ENCODE measurements at regions of chr2 and their contacts with region 1.

Region 1: DNA sequence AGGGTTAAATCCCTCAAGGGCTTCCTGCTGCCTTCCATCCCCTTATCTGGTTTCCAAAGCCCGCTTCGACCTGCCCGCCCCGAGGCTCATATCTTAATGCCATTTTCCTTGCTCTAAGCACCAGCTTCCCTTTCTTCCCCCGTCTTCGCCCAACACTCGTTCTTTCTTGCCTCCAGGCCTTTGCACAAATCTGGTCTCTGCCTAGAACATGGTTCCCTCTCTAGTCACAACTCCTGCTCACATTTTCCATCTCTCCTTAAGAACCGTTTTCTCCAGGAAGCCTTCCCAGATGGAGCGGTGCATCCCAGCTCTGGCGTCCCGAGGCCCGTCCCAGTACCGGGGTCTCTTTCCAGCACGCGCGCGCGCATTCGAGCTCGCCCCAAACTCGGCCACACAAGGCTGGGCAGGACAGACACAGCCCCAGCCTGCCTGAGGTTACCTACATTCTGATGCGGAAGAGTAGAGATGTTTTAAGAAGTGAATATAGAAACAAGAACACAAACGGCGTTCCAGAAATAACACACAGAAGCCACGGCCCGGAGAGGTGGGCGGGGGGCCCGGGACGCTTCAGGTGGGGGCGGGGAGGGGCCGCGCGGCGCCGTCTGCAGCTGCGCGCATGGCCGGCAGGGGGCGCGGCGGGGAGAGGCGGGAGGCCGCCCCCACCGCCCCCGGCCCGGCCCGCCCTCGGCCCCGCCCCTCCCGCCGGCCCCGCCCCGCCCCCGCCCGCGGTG is at the start of gene DGKD:
- DNase-seq: peak; percentile 85
- H3K4me3 ChIP-seq: peak within 1 kb of the TSS; percentile 88
- H3K27ac ChIP-seq: peak within 1 kb of the TSS; percentile 84
- H3K4me1 ChIP-seq: peaks cover 62% of the 10 kb centered on the region
- CTCF ChIP-seq: peak; percentile 51
- total RNA-seq, gene DGKD: 51.3 and 62.9 TPM in 2 replicates

Region 2: GRCh38 chr2:233267516-233268245 is 86.3 kb before region 1 on chr2:
- CTCF ChIA-PET with region 1: no interaction called
- POLR2A ChIA-PET with region 1: interaction called, 3 read pairs
- intact Hi-C with region 1: loop called (anchors 5 kb)
- DNase-seq: peak; percentile 80
- H3K4me3 ChIP-seq: no peak overlapping the region
- H3K27ac ChIP-seq: peak overlapping the region; percentile 53
- H3K4me1 ChIP-seq: peaks cover 36% of the 10 kb centered on the region
- CTCF ChIP-seq: no peak

Region 3: DNA sequence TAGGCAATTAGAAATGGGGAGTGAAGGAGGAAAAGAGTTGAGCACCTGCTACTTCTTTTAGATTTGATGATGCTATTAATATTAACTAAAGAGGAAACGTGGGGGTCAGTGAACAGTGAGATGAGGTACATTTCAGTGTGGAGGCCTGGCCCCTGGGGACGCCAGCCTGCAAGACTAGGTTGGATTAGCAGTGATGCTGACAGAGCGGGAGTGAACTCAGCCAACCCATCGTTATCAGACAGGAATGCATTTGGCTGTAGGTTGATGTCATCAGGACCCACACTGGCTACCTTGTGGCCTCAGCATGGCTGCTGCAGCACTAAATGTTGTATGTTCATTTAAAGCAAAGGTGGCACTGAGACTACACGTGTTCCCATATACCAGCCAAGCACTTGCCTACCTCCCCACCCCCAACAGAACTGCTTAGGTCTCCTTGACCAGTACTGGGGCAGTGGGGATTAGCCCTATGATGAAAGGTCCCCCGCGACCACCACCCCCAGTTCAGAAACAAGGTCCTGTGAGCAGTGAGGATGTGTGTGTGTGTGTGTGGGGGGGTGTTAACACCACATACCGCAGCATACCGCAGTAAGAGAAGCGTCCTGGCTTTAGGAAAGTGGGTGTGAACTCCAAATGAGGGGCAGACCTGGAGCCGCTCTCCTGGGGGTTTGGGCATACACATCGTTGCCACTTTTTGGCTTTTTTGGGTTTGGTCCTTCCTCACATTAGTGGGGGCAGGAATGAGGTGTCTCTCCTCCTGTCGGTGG is 26.4 kb after region 1 on chr2:
- CTCF ChIA-PET with region 1: interaction called, 8 read pairs
- POLR2A ChIA-PET with region 1: interaction called, 38 read pairs
- intact Hi-C with region 1: loop called (anchors 1 kb)
- DNase-seq: peak; percentile 62
- H3K4me3 ChIP-seq: peak overlapping the region; percentile 21
- H3K27ac ChIP-seq: peak overlapping the region; percentile 52
- H3K4me1 ChIP-seq: peaks cover 86% of the 10 kb centered on the region
- CTCF ChIP-seq: no peak

Region 4: DNA sequence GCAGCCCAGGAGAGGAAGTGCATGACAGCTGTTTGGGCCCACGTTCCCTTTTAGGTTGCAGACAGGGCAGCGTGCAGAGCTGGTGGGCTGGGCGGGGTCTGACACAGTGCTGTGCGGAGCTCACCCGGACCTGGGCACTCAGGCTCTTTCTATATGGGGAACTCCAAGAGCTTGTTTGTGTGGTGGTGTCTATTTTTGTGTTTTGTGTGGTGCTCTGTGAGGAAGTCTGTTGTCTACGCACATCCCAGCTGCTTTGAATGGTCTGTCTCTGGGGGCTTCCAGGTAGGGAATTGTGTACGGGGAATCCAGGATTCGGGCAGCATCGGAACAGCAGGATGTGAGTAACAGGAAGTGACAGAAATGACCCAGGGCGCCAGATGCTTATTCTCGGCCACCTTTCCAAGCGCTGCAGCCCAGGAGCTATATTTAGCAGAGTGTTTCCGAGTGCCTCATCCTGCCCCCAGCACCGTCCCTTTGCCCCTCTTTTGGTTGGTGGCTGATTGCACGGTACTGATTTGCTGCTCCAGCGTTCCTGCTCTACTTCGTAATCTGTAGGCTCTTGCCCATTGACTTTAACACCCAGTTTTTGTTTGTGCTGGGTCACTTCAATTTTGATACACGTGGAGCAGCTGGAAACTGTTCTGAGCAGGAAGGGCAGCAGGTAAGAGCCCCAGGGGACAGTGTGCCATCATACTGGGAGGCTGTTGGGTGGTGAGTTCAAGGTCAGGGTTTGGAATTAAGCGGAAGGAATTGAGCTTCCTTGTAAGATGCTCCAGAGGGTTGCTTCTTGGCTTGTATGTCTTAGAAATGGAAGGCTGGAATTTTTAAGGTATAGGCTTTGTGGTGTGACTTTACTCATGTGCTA is 65.1 kb after region 1 on chr2:
- CTCF ChIA-PET with region 1: interaction called, 3 read pairs
- POLR2A ChIA-PET with region 1: interaction called, 23 read pairs
- intact Hi-C with region 1: loop called (anchors 1 kb)
- DNase-seq: peak; percentile 85
- H3K4me3 ChIP-seq: peak overlapping the region; percentile 61
- H3K27ac ChIP-seq: peak overlapping the region; percentile 69
- H3K4me1 ChIP-seq: peaks cover 72% of the 10 kb centered on the region
- CTCF ChIP-seq: no peak

Measured in OCI-LY7 (cell line).